Naive thymus-derived CD4-positive, alpha-beta T cell (primary cell): ENCODE measurements at regions of chr2 and their contacts with region 1.

Region 1: GRCh38 chr2:71331581-71332434 is at the start of gene ZNF638:
- DNase-seq: peak; percentile 89 to 94 (median 93)
- ATAC-seq: peak; percentile 98
- H3K4me3 ChIP-seq: peak within 1 kb of the TSS; percentile 79
- H3K4me3 Mint-ChIP-seq: peak within 1 kb of the TSS; percentile 95 to 100 (median 99)
- H3K27ac ChIP-seq: peak within 1 kb of the TSS; percentile 99
- H3K27ac Mint-ChIP-seq: peak within 1 kb of the TSS; percentile 97 to 100 (median 100)
- H3K4me1 ChIP-seq: peaks cover 25 to 29% of the 10 kb centered on the region in 2 donors
- H3K4me1 Mint-ChIP-seq: peaks cover 19 to 56% (median 40%) of the 10 kb centered on the region in 7 donors
- H3K27me3 ChIP-seq: no peaks in the 10 kb centered on the region
- H3K27me3 Mint-ChIP-seq: peaks cover 0 to 20% (median 5%) of the 10 kb centered on the region in 5 donors
- total RNA-seq, gene ZNF638: 113 to 204 (median 121) TPM

Region 2: GRCh38 chr2:71120213-71120612 is 211.6 kb before region 1 on chr2:
- CTCF ChIA-PET with region 1: no interaction called
- POLR2A ChIA-PET with region 1: no interaction called
- intact Hi-C with region 1: no loop called
- DNase-seq: no peak
- ATAC-seq: no peak
- H3K4me3 ChIP-seq: no peak overlapping the region
- H3K4me3 Mint-ChIP-seq: no peak overlapping the region
- H3K27ac ChIP-seq: no peak overlapping the region
- H3K27ac Mint-ChIP-seq: no peak overlapping the region
- H3K4me1 ChIP-seq: no peaks in the 10 kb centered on the region
- H3K4me1 Mint-ChIP-seq: peaks cover 0 to 8% (median 0%) of the 10 kb centered on the region in 7 donors
- H3K27me3 ChIP-seq: no peaks in the 10 kb centered on the region
- H3K27me3 Mint-ChIP-seq: no peaks in the 10 kb centered on the region

Region 3: GRCh38 chr2:71130113-71130904 is 201.5 kb before region 1 on chr2 and contains the starts of genes MCEE and MPHOSPH10:
- CTCF ChIA-PET with region 1: no interaction called
- POLR2A ChIA-PET with region 1: interaction called, 5 read pairs
- intact Hi-C with region 1: loop called (anchors 1 to 2 kb)
- DNase-seq: peak; percentile 81 to 91 (median 89)
- ATAC-seq: peak; percentile 95
- H3K4me3 ChIP-seq: peak within 1 kb of the TSS; percentile 74
- H3K4me3 Mint-ChIP-seq: no peak within 1 kb of the TSS
- H3K27ac ChIP-seq: peak within 1 kb of the TSS; percentile 87
- H3K27ac Mint-ChIP-seq: peak within 1 kb of the TSS in 1 of 9 donors; percentile 45
- H3K4me1 ChIP-seq: peaks cover 21 to 22% of the 10 kb centered on the region in 2 donors
- H3K4me1 Mint-ChIP-seq: peaks cover 5 to 33% (median 26%) of the 10 kb centered on the region in 7 donors
- H3K27me3 ChIP-seq: no peaks in the 10 kb centered on the region
- H3K27me3 Mint-ChIP-seq: no peaks in the 10 kb centered on the region
- total RNA-seq, gene MCEE: 11.6 to 27.9 (median 16.4) TPM
- total RNA-seq, gene MPHOSPH10: 28.2 to 58.9 (median 43.8) TPM

Region 4: DNA sequence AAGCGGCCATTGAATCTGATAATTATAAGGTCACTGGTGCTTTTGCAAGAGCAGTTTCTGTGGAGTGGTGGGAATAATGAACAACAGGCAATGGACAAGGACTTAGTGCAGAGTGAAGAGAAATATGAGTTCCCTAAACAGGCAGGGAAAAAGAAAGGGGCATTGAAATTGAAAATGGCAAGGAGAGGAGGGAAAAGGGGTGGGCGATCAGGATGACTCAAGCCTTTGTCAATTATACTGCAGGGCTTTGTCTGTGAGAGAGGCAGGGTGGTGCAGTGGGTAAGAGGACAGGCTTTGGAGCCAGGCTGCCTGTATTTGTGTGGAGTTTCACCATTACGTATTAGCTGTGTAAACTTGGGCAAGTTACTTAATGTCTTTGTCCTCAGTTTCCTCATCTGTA is 75.4 kb before region 1 on chr2:
- CTCF ChIA-PET with region 1: no interaction called
- POLR2A ChIA-PET with region 1: no interaction called
- intact Hi-C with region 1: no loop called
- DNase-seq: no peak
- ATAC-seq: no peak
- H3K4me3 ChIP-seq: no peak overlapping the region
- H3K4me3 Mint-ChIP-seq: no peak overlapping the region
- H3K27ac ChIP-seq: no peak overlapping the region
- H3K27ac Mint-ChIP-seq: no peak overlapping the region
- H3K4me1 ChIP-seq: no peaks in the 10 kb centered on the region
- H3K4me1 Mint-ChIP-seq: no peaks in the 10 kb centered on the region
- H3K27me3 ChIP-seq: no peaks in the 10 kb centered on the region
- H3K27me3 Mint-ChIP-seq: peaks cover 20 to 51% (median 34%) of the 10 kb centered on the region in 5 donors

Region 5: GRCh38 chr2:71276311-71277146 is 55.3 kb before region 1 on chr2:
- CTCF ChIA-PET with region 1: no interaction called
- POLR2A ChIA-PET with region 1: no interaction called
- intact Hi-C with region 1: loop called (anchors 1 to 5 kb)
- DNase-seq: peak; percentile 70 to 92 (median 84)
- ATAC-seq: peak; percentile 100
- H3K4me3 ChIP-seq: peak overlapping the region; percentile 67
- H3K4me3 Mint-ChIP-seq: peak overlapping the region; percentile 39 to 85 (median 76)
- H3K27ac ChIP-seq: no peak overlapping the region
- H3K27ac Mint-ChIP-seq: no peak overlapping the region
- H3K4me1 ChIP-seq: peaks cover 4 to 16% of the 10 kb centered on the region in 2 donors
- H3K4me1 Mint-ChIP-seq: peaks cover 10 to 18% (median 13%) of the 10 kb centered on the region in 7 donors
- H3K27me3 ChIP-seq: peaks cover 11 to 15% of the 10 kb centered on the region in 2 donors
- H3K27me3 Mint-ChIP-seq: peaks cover 78 to 89% (median 86%) of the 10 kb centered on the region in 5 donors

Region 6: DNA sequence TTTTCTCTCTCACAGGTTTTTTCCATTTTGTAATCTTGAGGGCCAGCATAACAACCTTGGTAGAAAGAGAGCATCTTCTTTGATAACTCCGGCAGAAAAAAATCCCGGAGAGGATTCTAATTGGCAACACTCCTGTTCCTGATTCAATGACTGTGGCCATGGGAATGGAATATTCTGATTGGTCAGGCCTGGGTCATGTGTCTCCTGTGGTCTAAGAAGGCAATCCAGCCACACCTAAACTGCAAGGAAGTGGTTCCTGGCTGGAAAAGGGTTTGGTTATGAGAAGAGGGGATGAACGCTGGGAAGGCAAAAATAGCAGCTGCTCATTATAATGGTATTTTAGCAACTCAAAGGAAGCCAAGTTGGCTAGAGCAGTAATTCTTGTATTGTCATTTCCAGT is 25.0 kb before region 1 on chr2:
- CTCF ChIA-PET with region 1: no interaction called
- POLR2A ChIA-PET with region 1: no interaction called
- intact Hi-C with region 1: no loop called
- DNase-seq: no peak
- ATAC-seq: no peak
- H3K4me3 ChIP-seq: no peak overlapping the region
- H3K4me3 Mint-ChIP-seq: no peak overlapping the region
- H3K27ac ChIP-seq: no peak overlapping the region
- H3K27ac Mint-ChIP-seq: no peak overlapping the region
- H3K4me1 ChIP-seq: no peaks in the 10 kb centered on the region
- H3K4me1 Mint-ChIP-seq: no peaks in the 10 kb centered on the region
- H3K27me3 ChIP-seq: no peaks in the 10 kb centered on the region
- H3K27me3 Mint-ChIP-seq: peaks cover 0 to 15% (median 0%) of the 10 kb centered on the region in 5 donors

Region 7: DNA sequence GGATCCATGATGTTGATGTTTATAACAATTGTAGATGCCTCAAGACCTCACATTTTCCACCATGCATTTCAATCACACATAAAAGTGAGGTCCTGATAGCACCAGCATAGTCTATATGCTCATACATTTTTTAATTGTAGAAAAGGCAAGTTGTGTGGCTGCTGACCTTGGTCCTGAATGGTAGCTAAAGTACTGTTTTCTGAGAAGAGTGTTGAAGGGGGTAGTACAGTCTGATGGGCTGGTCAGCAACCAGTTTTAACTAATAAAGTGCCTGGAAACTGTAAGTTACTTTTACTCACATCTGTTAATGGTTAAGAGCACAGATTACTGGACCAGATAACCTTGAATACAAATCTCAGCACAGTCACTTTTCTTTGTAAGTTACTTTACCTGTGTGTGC is 15.7 kb after region 1 on chr2:
- CTCF ChIA-PET with region 1: interaction called, 4 read pairs
- POLR2A ChIA-PET with region 1: interaction called, 12 read pairs
- intact Hi-C with region 1: loop called (anchors 1 to 2 kb)
- DNase-seq: peak in 4 of 9 donors; percentile 12 to 26 (median 17)
- ATAC-seq: no peak
- H3K4me3 ChIP-seq: no peak overlapping the region
- H3K4me3 Mint-ChIP-seq: no peak overlapping the region
- H3K27ac ChIP-seq: no peak overlapping the region
- H3K27ac Mint-ChIP-seq: no peak overlapping the region
- H3K4me1 ChIP-seq: peaks cover 0 to 2% of the 10 kb centered on the region in 2 donors
- H3K4me1 Mint-ChIP-seq: peaks cover 16 to 93% (median 77%) of the 10 kb centered on the region in 7 donors
- H3K27me3 ChIP-seq: no peaks in the 10 kb centered on the region
- H3K27me3 Mint-ChIP-seq: no peaks in the 10 kb centered on the region

Region 8: GRCh38 chr2:71417300-71418202 is 85.7 kb after region 1 on chr2:
- CTCF ChIA-PET with region 1: interaction called, 3 read pairs
- POLR2A ChIA-PET with region 1: interaction called, 13 read pairs
- intact Hi-C with region 1: loop called in 1 of 2 experiments (anchors 5 kb)
- DNase-seq: peak in 2 of 9 donors; percentile 19 to 22
- ATAC-seq: peak; percentile 27
- H3K4me3 ChIP-seq: peak overlapping the region; percentile 40
- H3K4me3 Mint-ChIP-seq: peak overlapping the region; percentile 82 to 91 (median 88)
- H3K27ac ChIP-seq: peak overlapping the region; percentile 70
- H3K27ac Mint-ChIP-seq: peak overlapping the region; percentile 79 to 95 (median 92)
- H3K4me1 ChIP-seq: peaks cover 0 to 6% of the 10 kb centered on the region in 2 donors
- H3K4me1 Mint-ChIP-seq: peaks cover 1 to 24% (median 11%) of the 10 kb centered on the region in 7 donors
- H3K27me3 ChIP-seq: no peaks in the 10 kb centered on the region
- H3K27me3 Mint-ChIP-seq: no peaks in the 10 kb centered on the region